ENCODE measurements at regions of chr5 and their contacts with region 1.

Region 1: GRCh38 chr5:81105261-81105877 is 127.8 kb upstream of the CKMT2 start:
- DNase-seq: no peak
- ATAC-seq: no peak; the same call in 2 of the 3 replicates
- H3K4me3 ChIP-seq: no peak overlapping the region
- H3K27ac ChIP-seq: no peak overlapping the region
- H3K4me1 ChIP-seq: no peaks in the 10 kb centered on the region
- H3K27me3 ChIP-seq: no peaks in the 10 kb centered on the region
- CTCF ChIP-seq: no peak
- EP300 ChIP-seq: no peak
- POLR2A ChIP-seq: no peak
- RAD21 ChIP-seq: no peak

Region 2: DNA sequence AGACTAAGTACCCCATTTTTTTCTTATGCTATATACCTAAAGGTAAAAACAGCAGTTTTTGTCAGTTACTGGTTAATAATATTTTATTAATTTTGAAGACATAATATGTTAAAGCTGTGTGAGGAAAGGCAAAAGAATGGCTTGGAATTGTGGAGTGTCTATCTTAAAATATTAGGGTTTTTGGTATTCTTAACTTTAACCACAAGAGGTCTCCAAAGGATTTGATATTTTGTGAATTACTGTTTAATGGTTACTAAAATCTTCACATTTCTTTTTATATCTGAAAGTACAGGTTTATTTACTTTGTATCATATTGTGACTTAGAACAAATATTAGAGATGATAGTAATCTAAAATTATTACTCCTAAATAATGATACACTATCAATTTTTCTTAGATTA is 418.6 kb before region 1 on chr5:
- CTCF ChIA-PET with region 1: interaction called, 32 read pairs
- POLR2A ChIA-PET with region 1: no interaction called
- RAD21 ChIA-PET with region 1: interaction called, 9 read pairs
- SMC1A ChIA-PET with region 1: interaction called, 17 read pairs
- in situ Hi-C with region 1: no loop called
- intact Hi-C with region 1: loop called (anchors 5 kb)
- DNase-seq: no peak
- ATAC-seq: no peak
- H3K4me3 ChIP-seq: no peak overlapping the region
- H3K27ac ChIP-seq: no peak overlapping the region
- H3K4me1 ChIP-seq: no peaks in the 10 kb centered on the region
- H3K27me3 ChIP-seq: no peaks in the 10 kb centered on the region
- CTCF ChIP-seq: no peak; a peak in 1 of 6 replicates
- EP300 ChIP-seq: no peak
- POLR2A ChIP-seq: no peak
- RAD21 ChIP-seq: peak; percentile 40

Region 3: DNA sequence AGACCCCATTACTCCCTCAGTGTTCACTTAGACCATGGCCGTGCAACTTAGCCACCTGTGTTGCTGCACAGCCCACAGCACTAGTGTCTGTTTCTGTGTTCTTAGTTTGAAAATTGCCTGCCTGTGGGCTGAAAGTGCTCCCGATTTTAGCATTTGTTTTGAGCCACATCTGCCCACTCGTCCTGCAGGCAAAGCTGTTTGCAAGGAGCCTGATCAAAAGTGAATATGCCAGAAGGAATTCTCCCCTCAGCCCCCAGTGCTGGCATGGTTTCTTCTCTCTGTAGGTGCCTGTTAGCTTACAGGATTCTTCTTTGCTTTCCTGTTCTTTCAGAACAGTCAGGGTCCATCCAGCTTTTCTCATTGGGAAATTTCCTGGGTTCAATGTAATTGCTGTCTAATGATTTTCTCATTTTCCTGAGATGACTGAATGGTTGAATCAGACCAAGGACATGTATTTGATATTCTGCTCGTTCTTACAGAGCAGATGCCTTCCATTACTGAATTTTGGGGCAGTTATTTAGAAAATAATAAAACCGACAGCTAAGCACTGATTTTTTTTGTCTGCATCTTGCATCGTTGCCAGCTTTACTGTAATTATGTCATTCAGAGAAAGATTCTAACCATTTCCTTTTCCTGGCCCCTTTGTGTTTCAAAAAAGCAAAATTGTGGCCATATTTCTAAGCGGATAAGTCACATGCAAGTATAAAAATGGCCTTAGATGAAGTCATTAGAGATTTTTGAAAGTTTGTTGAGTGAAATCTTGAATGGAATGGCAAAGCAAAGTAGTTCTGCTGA is 16.7 kb after region 1 on chr5:
- CTCF ChIA-PET with region 1: interaction called, 22 read pairs
- POLR2A ChIA-PET with region 1: no interaction called
- RAD21 ChIA-PET with region 1: no interaction called
- SMC1A ChIA-PET with region 1: interaction called, 3 read pairs
- in situ Hi-C with region 1: no loop called
- intact Hi-C with region 1: no loop called
- DNase-seq: no peak
- ATAC-seq: no peak
- H3K4me3 ChIP-seq: no peak overlapping the region
- H3K27ac ChIP-seq: no peak overlapping the region
- H3K4me1 ChIP-seq: no peaks in the 10 kb centered on the region
- H3K27me3 ChIP-seq: peaks cover 0 to 3% of the 10 kb centered on the region in 2 experiments; a peak in 2 of 4 replicates
- CTCF ChIP-seq: no peak
- EP300 ChIP-seq: no peak
- POLR2A ChIP-seq: no peak
- RAD21 ChIP-seq: no peak